Left cardiac atrium (tissue), 4 donors: ENCODE measurements at regions of chr1 and their contacts with region 1.

Region 1: DNA sequence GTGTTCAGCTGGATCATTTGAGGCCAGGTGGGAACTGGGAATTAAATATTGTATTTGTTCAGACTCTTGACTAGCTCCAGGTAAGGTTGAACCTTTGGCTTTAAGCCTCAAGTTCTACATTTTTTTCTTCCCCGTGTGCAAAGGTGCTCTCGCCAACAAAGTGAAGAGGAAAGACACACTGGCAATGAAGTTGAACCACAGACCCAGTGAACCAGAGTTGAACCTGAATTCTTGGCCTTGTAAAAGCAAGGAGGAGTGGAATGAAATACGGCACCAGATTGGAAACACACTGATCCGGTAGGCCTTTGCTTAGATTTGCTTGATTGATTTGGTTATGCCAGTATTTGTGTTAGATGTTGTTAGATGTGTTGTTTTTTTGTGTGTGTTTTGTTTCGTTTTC is 25.5 kb upstream of the RCC1 start:
- DNase-seq: no peak
- ATAC-seq: no peak

Region 2: DNA sequence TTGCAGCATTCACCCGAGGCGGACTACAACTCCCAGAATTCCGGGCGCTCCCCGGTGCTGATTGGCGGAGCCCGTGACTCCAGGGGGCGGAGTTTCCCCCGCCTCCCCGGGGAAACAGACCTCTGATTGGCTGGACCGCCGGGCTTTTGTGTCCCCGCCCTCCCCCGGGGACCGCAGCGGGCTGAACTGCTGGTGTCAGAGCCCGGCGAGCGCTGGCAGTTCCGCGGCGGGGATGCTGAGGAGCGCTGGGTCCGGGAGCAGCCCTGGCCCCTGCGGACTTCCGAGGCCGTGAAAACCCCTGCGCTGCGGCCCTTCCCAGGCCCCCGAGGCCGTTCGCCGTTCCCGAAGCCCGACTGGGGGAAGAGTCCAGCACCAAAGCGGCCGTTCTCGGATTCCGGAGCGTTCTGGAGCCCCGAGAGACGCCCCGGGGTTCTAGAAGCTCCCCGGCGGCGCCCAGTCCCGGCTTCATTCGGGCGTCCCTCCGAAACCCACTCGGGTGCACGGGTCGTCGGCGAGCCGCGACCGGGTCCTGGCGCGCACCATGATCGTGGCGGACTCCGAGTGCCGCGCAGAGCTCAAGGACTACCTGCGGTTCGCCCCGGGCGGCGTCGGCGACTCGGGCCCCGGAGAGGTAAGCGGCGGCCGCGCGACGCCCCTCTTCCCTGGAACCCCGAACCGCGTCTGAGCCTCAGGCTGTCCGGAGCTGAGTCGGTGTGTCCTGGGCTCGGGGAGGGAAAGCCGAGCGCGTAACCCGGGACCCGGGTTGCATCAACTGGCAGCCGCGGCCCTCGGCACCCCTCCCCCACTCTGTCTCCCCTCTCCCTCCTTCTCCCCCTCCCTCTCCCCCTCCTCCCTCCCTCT is 220.8 kb before region 1 on chr1 and contains the start of gene SESN2:
- intact Hi-C with region 1: no loop called
- DNase-seq: peak; percentile 100
- ATAC-seq: peak; percentile 96 to 97
- total RNA-seq, gene SESN2: 4.4 to 4.5 TPM

Region 3: DNA sequence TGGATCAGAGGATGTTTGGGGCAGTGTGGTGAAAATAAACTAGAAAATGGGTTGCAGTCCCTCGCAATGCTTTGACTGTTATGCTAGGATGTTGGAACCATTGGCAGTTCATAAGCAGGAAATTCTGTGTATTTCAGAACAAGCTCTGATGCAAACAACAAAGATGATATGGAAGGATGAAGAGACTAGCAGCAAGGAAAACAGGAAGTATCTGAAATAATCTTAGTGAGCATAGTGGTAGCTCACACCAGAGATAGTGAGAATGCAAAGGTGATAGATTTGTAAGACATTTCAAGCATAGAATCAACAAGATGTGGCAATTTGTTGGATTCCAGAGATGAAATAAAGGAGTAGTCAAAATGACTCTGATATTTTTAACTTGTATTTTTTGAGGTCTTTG is 14.4 kb after region 1 on chr1:
- intact Hi-C with region 1: loop called in 1 of 2 experiments (anchors 2 kb)
- DNase-seq: no peak
- ATAC-seq: no peak

Region 4: GRCh38 chr1:28656335-28656734 is 176.0 kb after region 1 on chr1:
- intact Hi-C with region 1: no loop called
- DNase-seq: no peak
- ATAC-seq: no peak

Region 5: GRCh38 chr1:28956038-28956464 is 475.7 kb after region 1 on chr1:
- intact Hi-C with region 1: no loop called
- DNase-seq: no peak
- ATAC-seq: no peak